ENCODE measurements at regions of chr7 and their contacts with region 1.

Region 1: DNA sequence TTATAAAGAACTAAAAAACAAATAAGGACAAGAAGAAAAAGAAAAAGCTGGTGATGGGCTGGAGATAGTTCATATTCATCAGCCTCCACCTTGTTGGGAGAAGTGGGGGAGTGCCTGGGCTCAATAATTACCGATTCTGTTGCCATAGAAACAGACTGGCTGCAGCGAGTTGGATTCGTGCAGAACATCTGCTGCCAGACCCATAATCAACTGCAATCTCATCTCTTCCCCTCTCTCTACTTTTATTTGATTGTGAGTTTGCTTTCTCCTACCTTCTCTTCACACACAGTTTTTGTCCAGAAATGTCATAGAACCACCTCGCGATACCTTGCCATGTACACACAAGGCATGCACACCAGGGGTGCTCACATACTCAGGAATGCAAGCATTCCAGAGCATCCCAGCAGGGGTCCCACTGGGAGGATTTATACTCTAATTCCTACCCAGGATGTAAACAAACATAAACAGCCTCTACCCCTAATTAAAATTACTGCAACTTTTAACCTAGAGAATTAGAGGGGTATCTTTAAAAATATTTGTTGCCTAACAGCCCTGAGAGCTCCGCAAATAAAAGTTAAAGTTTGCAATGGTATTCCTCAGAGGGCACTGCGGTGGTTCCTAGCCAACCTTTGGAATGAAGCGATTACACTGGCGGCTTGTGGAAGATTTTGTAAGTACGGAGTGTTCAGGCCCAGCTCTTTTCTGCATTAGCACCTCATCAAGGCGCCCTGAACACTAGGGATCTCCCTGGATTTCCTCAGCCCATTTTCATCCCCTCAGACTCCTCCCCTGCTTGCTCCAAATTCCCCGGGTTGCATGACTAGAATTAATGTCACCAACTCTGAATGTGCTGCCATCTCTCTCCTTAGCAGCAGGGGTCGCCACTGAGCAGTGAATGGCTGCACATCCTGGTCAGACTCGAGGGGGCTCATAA is 262.4 kb upstream of the AOAH start:
- DNase-seq: peak; percentile 8
- H3K4me3 ChIP-seq: no peak overlapping the region
- H3K27ac ChIP-seq: no peak overlapping the region
- H3K27me3 ChIP-seq: peaks cover 5% of the 10 kb centered on the region
- CTCF ChIP-seq: peak; percentile 96

Region 2: DNA sequence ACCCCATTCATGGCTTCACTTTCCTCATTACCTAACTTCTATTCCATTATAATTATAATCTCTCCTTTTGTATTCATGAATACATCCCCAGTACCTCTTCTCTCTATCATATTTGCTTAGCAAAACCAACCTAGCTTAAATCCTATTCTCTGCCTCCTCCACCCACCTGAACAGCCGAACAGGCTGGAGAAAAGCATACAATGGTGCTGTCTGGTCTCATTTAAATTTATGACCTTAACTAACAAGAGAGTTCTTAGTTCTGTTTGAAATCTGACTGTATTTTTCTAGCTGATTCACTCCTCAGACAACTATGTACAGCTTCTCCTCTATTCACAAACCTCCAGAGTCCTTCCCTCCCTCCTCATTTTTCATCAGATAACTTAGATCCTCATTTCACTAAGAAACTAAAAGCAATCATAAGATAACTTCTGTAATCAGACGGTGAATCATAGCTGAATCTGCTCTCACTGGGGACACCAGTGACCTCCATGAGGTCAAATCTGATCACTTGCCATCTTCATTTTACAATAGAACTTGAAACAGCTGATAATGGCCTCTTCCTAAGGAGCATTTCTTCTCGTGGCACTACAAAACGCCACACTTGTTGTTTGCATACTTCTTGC is 28.5 kb before region 1 on chr7:
- CTCF ChIA-PET with region 1: interaction called, 10 read pairs
- POLR2A ChIA-PET with region 1: no interaction called
- DNase-seq: no peak
- H3K4me3 ChIP-seq: no peak overlapping the region
- H3K27ac ChIP-seq: no peak overlapping the region
- H3K27me3 ChIP-seq: no peaks in the 10 kb centered on the region
- CTCF ChIP-seq: no peak

Region 3: DNA sequence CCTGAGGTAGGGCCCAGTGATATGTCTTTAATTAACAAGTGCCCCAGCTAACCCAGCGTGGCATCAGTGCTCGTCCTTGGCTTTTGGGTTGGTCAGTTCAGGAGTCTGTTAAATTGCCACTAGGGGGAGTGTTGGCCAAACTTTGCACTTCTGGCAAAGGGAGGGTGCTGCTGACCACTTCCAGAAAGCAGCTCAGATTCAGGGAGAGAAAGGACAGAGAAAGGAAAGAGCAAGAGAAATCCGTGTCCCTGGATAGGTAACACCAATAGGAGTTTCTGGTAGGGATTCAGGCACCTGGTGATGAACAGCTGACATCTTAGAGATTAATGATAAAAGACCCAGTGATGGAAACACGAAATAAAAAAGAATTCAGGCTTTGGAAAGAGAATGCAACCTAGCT is 19.3 kb before region 1 on chr7:
- CTCF ChIA-PET with region 1: interaction called, 89 read pairs
- POLR2A ChIA-PET with region 1: no interaction called
- DNase-seq: peak; percentile 21
- H3K4me3 ChIP-seq: no peak overlapping the region
- H3K27ac ChIP-seq: no peak overlapping the region
- H3K27me3 ChIP-seq: peaks cover 2% of the 10 kb centered on the region
- CTCF ChIP-seq: peak; percentile 86

Region 4: DNA sequence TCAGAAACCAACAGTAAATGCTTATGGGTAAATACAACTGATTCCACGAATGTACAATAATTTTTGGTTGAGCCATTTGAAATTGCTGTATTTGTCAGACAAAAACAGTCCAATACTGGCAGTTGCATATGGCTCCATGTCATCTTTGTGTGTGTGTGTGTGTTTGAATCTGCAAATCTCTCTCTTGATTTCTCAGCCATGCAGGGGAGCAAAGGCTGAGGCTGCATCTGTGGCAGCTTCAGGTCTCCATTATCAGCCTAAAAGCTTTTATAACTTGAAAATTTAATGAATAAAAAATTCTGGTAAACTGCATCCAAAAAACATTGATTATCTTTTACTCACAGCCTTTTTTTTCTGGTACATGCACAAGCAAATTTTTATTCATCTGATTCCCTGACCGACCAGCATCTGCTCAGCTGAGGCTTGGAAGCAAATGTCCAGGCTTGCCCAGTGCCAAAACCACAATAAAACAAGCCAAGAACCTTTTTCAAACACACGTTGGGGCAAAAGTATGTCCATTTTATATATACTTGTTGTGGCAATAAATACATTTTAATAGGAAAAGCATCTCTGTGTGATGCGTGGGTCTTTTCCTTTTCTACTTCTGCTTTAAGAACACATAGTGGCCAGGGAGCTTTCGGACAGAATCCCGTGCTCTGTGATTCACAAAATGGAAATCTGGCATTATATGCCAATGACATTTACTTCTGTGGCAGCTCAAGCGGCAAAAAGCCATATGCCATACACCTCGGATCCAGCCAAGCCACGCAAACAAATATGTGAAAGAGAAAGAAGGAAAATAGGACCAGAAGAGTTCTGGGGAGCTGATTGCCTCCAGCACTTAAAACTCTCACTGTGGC is 13.2 kb after region 1 on chr7:
- CTCF ChIA-PET with region 1: interaction called, 22 read pairs
- POLR2A ChIA-PET with region 1: no interaction called
- DNase-seq: no peak
- H3K4me3 ChIP-seq: no peak overlapping the region
- H3K27ac ChIP-seq: no peak overlapping the region
- H3K27me3 ChIP-seq: no peaks in the 10 kb centered on the region
- CTCF ChIP-seq: no peak

Region 5: DNA sequence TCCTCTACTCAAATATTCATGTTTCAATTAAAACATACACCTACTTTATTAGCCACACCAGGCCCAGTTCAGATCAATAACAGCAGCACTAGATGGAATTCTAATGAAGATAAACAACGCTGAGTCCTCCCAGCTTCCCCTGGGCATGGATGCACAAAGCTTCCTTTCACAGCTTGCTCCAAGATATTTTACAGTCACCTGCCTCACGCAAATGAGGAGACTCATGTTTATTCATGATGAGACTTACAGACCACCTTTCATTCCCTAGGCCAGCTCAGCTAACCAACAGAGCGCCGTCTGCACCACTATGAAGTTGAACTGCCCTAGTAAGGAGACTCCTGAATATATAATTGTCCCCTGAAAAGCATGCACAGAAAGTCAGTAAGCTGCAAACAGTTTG is 20.6 kb after region 1 on chr7:
- CTCF ChIA-PET with region 1: interaction called, 18 read pairs
- POLR2A ChIA-PET with region 1: no interaction called
- DNase-seq: no peak
- H3K4me3 ChIP-seq: no peak overlapping the region
- H3K27ac ChIP-seq: no peak overlapping the region
- H3K27me3 ChIP-seq: peaks cover 2% of the 10 kb centered on the region
- CTCF ChIP-seq: no peak

Region 6: GRCh38 chr7:37201003-37201875 is 214.5 kb after region 1 on chr7:
- CTCF ChIA-PET with region 1: interaction called, 21 read pairs
- POLR2A ChIA-PET with region 1: no interaction called
- DNase-seq: peak; percentile 30
- H3K4me3 ChIP-seq: no peak overlapping the region
- H3K27ac ChIP-seq: no peak overlapping the region
- H3K27me3 ChIP-seq: peaks cover 2% of the 10 kb centered on the region
- CTCF ChIP-seq: peak; percentile 82

Region 7: DNA sequence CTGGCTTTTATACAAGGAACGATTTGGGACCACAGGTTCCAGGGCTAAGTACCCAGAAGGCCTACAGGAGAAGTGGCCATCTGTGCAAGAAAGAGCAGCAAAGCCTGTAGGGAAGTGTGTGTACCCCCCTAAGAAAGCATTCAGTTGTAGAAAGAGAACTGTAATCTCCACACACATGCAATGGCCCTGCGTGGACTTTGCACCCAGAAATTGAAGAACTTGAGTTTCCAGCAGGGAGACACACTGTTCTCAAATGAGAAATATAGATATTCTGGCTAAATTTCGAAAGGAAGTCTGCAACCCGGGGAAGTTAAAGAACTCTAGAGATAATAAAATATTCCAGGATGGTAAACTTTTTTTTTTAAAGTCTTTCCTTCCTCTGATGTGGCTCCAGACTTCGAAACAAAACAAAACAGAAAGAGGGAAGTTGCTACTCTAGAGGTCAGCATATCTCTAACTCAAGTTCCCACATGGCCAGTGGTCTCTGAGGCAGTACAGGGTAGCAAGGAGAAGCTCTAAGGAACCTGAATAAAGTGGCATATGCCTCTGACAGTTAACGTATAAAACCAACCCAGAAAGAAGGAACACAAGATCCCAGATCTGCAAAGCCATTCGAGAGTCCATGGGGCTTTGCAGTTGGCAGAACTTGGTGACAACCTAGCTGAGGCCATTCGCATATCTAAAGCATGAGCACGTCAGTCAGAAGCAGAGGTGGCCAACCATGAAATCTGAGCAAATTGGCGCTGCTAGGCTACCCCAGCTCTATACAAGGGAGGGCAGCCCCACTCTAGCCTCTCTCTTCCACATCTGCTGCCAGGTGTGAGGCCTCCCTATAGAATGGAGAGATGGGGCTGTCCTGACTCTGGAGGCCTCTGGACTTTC is 405.3 kb after region 1 on chr7:
- CTCF ChIA-PET with region 1: no interaction called
- POLR2A ChIA-PET with region 1: no interaction called
- DNase-seq: no peak
- H3K4me3 ChIP-seq: no peak overlapping the region
- H3K27ac ChIP-seq: no peak overlapping the region
- H3K27me3 ChIP-seq: no peaks in the 10 kb centered on the region
- CTCF ChIP-seq: no peak